PC-3 (cell line): ENCODE measurements at regions of chr4 and their contacts with region 1.

Region 1: GRCh38 chr4:48668254-48669017 is 111.6 kb downstream of the FRYL start:
- DNase-seq: no peak
- ATAC-seq: no peak
- H3K4me3 ChIP-seq: no peak overlapping the region
- H3K27ac ChIP-seq: no peak overlapping the region
- H3K4me1 ChIP-seq: peaks cover 20% of the 10 kb centered on the region
- H3K27me3 ChIP-seq: no peaks in the 10 kb centered on the region
- CTCF ChIP-seq: no peak

Region 2: GRCh38 chr4:48602222-48602621 is 66.2 kb before region 1 on chr4:
- CTCF ChIA-PET with region 1: no interaction called
- POLR2A ChIA-PET with region 1: interaction called, 7 read pairs
- intact Hi-C with region 1: loop called (anchors 2 kb)
- DNase-seq: peak; percentile 82
- ATAC-seq: peak; percentile 82
- H3K4me3 ChIP-seq: peak overlapping the region; percentile 60
- H3K27ac ChIP-seq: peak overlapping the region; percentile 81
- H3K4me1 ChIP-seq: peaks cover 25% of the 10 kb centered on the region
- H3K27me3 ChIP-seq: no peaks in the 10 kb centered on the region
- CTCF ChIP-seq: no peak

Region 3: GRCh38 chr4:48623182-48623780 is 45.2 kb before region 1 on chr4:
- CTCF ChIA-PET with region 1: no interaction called
- POLR2A ChIA-PET with region 1: no interaction called
- intact Hi-C with region 1: no loop called
- DNase-seq: no peak
- ATAC-seq: no peak
- H3K4me3 ChIP-seq: no peak overlapping the region
- H3K27ac ChIP-seq: no peak overlapping the region
- H3K4me1 ChIP-seq: no peaks in the 10 kb centered on the region
- H3K27me3 ChIP-seq: no peaks in the 10 kb centered on the region
- CTCF ChIP-seq: no peak

Region 4: DNA sequence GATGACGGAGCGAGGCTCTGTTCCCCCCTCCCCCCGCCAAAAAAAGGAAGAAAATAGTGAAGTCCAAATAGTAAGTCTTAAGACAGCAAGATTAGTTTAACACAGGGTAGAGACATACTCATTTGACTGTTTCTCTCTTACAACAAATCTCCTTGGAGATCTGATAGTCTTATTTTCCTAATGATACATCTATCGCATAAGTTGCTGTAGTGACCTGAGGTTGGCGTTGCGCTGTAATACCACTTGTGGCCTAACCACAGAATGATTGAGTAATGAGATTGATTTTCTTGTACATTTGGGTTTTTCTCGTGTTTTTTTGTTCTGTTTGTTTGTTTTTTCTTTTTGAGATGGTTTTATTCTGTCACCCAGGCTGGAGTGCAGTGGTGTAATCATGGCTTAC is 189.7 kb after region 1 on chr4:
- CTCF ChIA-PET with region 1: no interaction called
- POLR2A ChIA-PET with region 1: no interaction called
- intact Hi-C with region 1: no loop called
- DNase-seq: no peak
- ATAC-seq: no peak
- H3K4me3 ChIP-seq: no peak overlapping the region
- H3K27ac ChIP-seq: no peak overlapping the region
- H3K4me1 ChIP-seq: no peaks in the 10 kb centered on the region
- H3K27me3 ChIP-seq: no peaks in the 10 kb centered on the region
- CTCF ChIP-seq: no peak